Activated B cell treated with CpG ODN at 0.5 μM for 24 hours (primary cell): ENCODE measurements at regions of chr19 and their contacts with region 1.

Region 1: GRCh38 chr19:18879579-18880373 is 16.2 kb downstream of the CERS1 start:
- DNase-seq: no peak
- ATAC-seq: peak; percentile 57
- H3K4me3 Mint-ChIP-seq: no peak overlapping the region
- H3K27ac Mint-ChIP-seq: no peak overlapping the region
- H3K4me1 Mint-ChIP-seq: no peaks in the 10 kb centered on the region
- H3K27me3 Mint-ChIP-seq: no peaks in the 10 kb centered on the region
- CTCF ChIP-seq: no peak

Region 2: GRCh38 chr19:18434411-18435175 is 445.2 kb before region 1 on chr19:
- CTCF ChIA-PET with region 1: no interaction called
- POLR2A ChIA-PET with region 1: no interaction called
- intact Hi-C with region 1: no loop called
- DNase-seq: no peak
- ATAC-seq: no peak
- H3K4me3 Mint-ChIP-seq: peak overlapping the region; percentile 79
- H3K27ac Mint-ChIP-seq: peak overlapping the region; percentile 24
- H3K4me1 Mint-ChIP-seq: peaks cover 40% of the 10 kb centered on the region
- H3K27me3 Mint-ChIP-seq: no peaks in the 10 kb centered on the region
- CTCF ChIP-seq: no peak

Region 3: GRCh38 chr19:18895038-18895823 is 15.5 kb after region 1 on chr19:
- CTCF ChIA-PET with region 1: no interaction called
- POLR2A ChIA-PET with region 1: no interaction called
- intact Hi-C with region 1: no loop called
- DNase-seq: no peak
- ATAC-seq: no peak
- H3K4me3 Mint-ChIP-seq: peak overlapping the region; percentile 38
- H3K27ac Mint-ChIP-seq: no peak overlapping the region
- H3K4me1 Mint-ChIP-seq: peaks cover 18% of the 10 kb centered on the region
- H3K27me3 Mint-ChIP-seq: peaks cover 21% of the 10 kb centered on the region
- CTCF ChIP-seq: no peak

Region 4: GRCh38 chr19:18961767-18962620 is 82.2 kb after region 1 on chr19:
- CTCF ChIA-PET with region 1: no interaction called
- POLR2A ChIA-PET with region 1: no interaction called
- intact Hi-C with region 1: no loop called
- DNase-seq: no peak
- ATAC-seq: no peak
- H3K4me3 Mint-ChIP-seq: no peak overlapping the region
- H3K27ac Mint-ChIP-seq: no peak overlapping the region
- H3K4me1 Mint-ChIP-seq: peaks cover 10% of the 10 kb centered on the region
- H3K27me3 Mint-ChIP-seq: peaks cover 16% of the 10 kb centered on the region
- CTCF ChIP-seq: no peak

Region 5: DNA sequence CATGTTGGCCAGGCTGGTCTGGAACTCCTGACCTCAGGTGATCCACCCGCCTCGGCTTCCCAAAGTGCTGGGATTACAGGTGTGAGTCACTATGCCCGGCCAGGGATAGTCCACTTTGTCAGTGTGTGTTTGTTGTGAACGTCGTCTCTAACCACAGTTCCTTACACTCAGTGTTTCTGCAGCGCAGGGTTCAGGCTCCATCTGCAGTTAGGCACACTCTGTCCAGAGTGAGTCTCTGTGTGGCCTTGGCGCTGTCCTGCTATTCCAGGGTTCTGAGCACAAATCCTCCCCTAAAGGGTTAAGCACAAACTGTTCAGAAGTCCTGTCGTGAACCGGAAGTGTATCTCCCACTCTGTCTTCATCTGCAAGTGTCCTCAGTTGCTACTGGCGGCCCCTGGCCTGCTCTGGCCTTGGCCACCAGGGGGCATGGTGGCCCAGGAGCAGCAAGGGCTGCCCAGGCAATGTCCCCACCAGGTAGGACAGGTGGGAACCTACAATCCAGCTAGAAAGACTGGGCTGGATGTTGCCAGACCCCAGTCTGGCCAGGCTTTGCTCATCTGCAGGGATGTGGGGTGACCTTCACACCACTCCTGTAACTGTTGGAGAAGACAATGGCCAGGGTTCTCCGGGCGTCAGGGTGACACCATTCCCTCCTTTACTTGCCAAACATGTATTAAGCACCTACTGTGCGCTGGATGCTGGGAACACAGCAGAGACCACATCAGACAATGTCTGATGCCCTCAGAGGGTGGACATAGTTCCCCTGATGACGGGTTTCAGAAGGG is 487.0 kb after region 1 on chr19:
- CTCF ChIA-PET with region 1: no interaction called
- POLR2A ChIA-PET with region 1: interaction called, 10 read pairs
- intact Hi-C with region 1: no loop called
- DNase-seq: peak; percentile 65
- ATAC-seq: peak; percentile 84
- H3K4me3 Mint-ChIP-seq: peak overlapping the region; percentile 36
- H3K27ac Mint-ChIP-seq: peak overlapping the region; percentile 69
- H3K4me1 Mint-ChIP-seq: peaks cover 20% of the 10 kb centered on the region
- H3K27me3 Mint-ChIP-seq: no peaks in the 10 kb centered on the region
- CTCF ChIP-seq: peak; percentile 83